Esophagus squamous epithelium (tissue), 5 donors: ENCODE measurements at regions of chr5 and their contacts with region 1.

Region 1: GRCh38 chr5:32232441-32233219 is 58.5 kb upstream of the GOLPH3 start:
- DNase-seq: no peak
- H3K4me3 ChIP-seq: no peak overlapping the region
- H3K27ac ChIP-seq: peak overlapping the region; percentile 36 to 74 (median 66)
- H3K4me1 ChIP-seq: peaks cover 15 to 53% (median 26%) of the 10 kb centered on the region in 3 donors
- H3K27me3 ChIP-seq: no peaks in the 10 kb centered on the region
- CTCF ChIP-seq: peak; percentile 82 to 93 (median 87)
- POLR2A ChIP-seq: no peak

Region 2: GRCh38 chr5:32331217-32331934 is 98.7 kb after region 1 on chr5:
- intact Hi-C with region 1: loop called (anchors 5 kb)
- DNase-seq: no peak
- H3K4me3 ChIP-seq: no peak overlapping the region
- H3K27ac ChIP-seq: peak overlapping the region in 3 of 4 donors; percentile 49 to 86 (median 65)
- H3K4me1 ChIP-seq: peaks cover 0 to 37% (median 5%) of the 10 kb centered on the region in 3 donors
- H3K27me3 ChIP-seq: no peaks in the 10 kb centered on the region
- CTCF ChIP-seq: no peak
- POLR2A ChIP-seq: no peak